Activated naive CD4-positive, alpha-beta T cell treated with anti-CD3 and anti-CD28 coated beads, Interleukin-2, amount 10 ng/mL, durations not matched to agents 7 days and 5 days (primary cell): ENCODE measurements at regions of chr14 and their contacts with region 1.

Region 1: GRCh38 chr14:24160850-24161804 is at the start of gene IRF9:
- DNase-seq: peak; percentile 98
- H3K4me3 Mint-ChIP-seq: peak within 1 kb of the TSS; percentile 97
- H3K27ac Mint-ChIP-seq: peak within 1 kb of the TSS; percentile 99
- H3K4me1 Mint-ChIP-seq: peaks cover 63% of the 10 kb centered on the region
- H3K27me3 Mint-ChIP-seq: peaks cover 6% of the 10 kb centered on the region

Region 2: GRCh38 chr14:24080888-24081738 is 80.0 kb before region 1 on chr14:
- CTCF ChIA-PET with region 1: interaction called, 11 read pairs
- DNase-seq: peak; percentile 87
- H3K4me3 Mint-ChIP-seq: peak overlapping the region; percentile 75
- H3K27ac Mint-ChIP-seq: peak overlapping the region; percentile 75
- H3K4me1 Mint-ChIP-seq: peaks cover 35% of the 10 kb centered on the region
- H3K27me3 Mint-ChIP-seq: peaks cover 50% of the 10 kb centered on the region

Region 3: GRCh38 chr14:24108336-24108874 is 52.7 kb before region 1 on chr14:
- CTCF ChIA-PET with region 1: interaction called, 14 read pairs
- DNase-seq: no peak
- H3K4me3 Mint-ChIP-seq: no peak overlapping the region
- H3K27ac Mint-ChIP-seq: peak overlapping the region; percentile 97
- H3K4me1 Mint-ChIP-seq: peaks cover 37% of the 10 kb centered on the region
- H3K27me3 Mint-ChIP-seq: no peaks in the 10 kb centered on the region

Region 4: DNA sequence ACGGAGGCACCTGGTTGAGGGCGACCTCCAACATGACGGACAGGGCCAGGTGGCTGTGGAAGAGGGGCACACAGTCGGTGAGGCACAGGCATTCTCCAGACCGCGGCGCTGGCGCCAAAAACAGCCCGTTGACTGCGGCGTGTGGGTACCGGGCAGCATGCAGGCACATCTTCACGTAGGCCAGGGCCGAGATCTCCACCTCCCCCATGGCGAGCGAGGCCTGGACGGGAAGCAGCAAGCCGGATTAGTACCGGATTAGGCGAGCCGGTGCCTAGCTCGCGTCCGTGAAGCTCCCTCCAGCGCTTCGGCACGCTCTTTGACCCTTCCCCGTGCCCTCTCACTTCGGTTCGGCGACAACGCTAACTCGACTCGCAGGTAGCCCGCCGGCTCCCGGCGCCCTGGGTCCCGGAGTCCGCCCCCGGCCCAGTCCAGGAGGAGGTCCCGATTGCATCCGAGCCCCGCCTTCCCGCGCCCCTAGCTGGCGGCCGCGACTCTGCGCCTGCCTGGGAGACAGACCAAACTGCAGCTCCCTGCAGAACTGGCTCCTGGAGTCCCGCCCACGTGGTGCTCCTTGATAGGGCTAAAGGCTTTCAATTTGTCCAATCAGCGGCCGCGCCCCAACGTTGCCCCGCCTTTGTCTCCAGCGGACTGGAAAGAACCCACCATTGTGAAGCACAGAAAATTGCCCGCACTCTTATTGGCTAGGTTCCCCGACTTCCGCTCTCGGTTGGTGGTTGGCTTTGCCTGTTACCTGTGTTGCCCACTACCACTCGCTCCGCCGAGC is 19.8 kb before region 1 on chr14 and contains the start of gene EMC9:
- CTCF ChIA-PET with region 1: interaction called, 67 read pairs
- DNase-seq: peak; percentile 100
- H3K4me3 Mint-ChIP-seq: peak within 1 kb of the TSS; percentile 95
- H3K27ac Mint-ChIP-seq: peak within 1 kb of the TSS; percentile 80
- H3K4me1 Mint-ChIP-seq: peaks cover 74% of the 10 kb centered on the region
- H3K27me3 Mint-ChIP-seq: no peaks in the 10 kb centered on the region

Region 5: GRCh38 chr14:24146978-24147760 is 14.0 kb before region 1 on chr14 and contains the start of gene RNF31:
- CTCF ChIA-PET with region 1: interaction called, 67 read pairs
- DNase-seq: peak; percentile 100
- H3K4me3 Mint-ChIP-seq: peak within 1 kb of the TSS; percentile 93
- H3K27ac Mint-ChIP-seq: peak within 1 kb of the TSS; percentile 99
- H3K4me1 Mint-ChIP-seq: peaks cover 65% of the 10 kb centered on the region
- H3K27me3 Mint-ChIP-seq: no peaks in the 10 kb centered on the region